Activated naive CD4-positive, alpha-beta T cell treated with anti-CD3 and anti-CD28 coated beads for 36 hours (primary cell): ENCODE measurements at regions of chr7 and their contacts with region 1.

Region 1: DNA sequence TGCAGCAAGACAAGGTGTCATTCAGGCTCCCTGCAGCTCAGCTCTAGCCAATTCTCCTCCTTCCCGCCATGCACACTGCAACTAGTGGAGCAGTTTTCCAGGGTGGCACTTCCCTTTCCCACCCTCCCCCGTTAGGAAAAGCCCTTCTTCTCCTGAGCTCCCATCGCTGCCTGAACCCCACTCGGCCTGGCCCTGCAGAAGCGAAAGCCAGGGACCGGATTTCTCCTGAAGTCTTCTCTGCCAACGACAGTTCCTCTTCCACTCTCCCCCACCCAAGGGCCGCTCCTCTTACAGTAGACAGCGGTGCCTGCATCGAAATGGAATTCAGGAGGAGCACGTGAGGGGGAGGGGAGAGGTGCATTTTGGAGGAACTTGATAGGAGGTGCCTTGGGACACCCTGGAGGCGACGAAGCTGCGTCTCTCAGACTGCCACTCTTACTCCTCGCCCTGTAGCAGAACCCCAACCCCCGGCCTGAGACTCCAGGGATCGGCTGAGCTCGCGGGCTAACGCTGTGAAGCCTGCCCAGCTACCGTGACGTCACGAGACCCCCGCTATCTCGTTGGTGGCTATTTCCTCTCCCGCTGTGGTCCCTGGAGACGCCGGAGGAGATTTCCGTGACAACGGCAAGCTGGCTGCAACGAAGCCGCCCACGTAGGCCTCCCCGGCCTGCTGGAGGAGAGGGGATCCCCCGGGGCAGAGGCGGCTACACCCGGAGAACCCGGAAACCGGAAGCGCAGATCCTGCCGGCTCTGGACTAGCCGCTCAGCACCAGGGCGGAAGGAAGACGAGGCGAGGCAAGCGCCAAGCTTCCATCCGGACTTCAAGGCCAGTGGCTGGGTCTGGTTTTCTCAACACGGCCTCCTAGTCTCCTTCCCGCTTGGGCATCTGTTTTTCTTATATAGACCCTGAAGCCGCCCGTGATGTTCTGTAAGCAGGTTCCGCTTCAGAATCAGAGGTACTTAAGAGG is 109.7 kb downstream of the RALA start:
- DNase-seq: peak; percentile 98
- H3K4me3 Mint-ChIP-seq: peak overlapping the region; percentile 74
- H3K27ac Mint-ChIP-seq: peak overlapping the region; percentile 61
- H3K4me1 Mint-ChIP-seq: peaks cover 32% of the 10 kb centered on the region
- H3K27me3 Mint-ChIP-seq: peaks cover 3% of the 10 kb centered on the region

Region 2: DNA sequence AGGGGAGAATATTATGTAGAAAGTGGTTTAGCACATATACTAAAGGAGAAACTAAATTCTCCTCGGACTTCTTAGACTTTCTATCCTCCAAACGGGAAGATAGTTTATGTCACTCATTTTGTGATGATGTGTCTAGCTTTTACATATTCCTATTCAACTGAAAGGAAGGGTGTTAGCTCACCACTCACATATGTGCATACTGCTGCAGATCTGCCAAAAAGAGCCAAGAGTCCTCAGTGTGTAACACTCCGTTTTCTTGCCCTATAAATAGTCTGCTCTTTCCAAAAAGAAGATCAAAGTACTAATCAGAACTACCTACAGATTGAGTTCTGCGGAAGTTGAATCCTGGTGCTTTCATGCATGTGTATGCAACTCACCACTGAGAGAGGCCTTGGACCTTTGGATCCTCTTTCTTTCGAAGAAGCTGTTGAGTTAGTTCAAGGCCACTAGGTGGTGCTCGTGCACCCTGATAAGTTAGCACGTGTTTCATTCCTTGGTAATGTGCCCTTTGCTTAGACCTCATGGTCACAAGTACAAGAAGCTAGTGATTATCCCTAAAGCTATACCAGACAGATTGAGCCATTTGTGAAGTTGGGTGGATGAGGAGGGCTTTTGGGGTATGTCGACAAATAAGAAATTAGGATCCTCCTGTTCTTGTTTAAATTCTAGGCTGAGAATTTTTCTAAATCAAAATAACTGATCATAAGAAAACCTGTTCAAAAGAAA is 152.8 kb before region 1 on chr7:
- CTCF ChIA-PET with region 1: interaction called, 364 read pairs
- intact Hi-C with region 1: no loop called
- DNase-seq: peak; percentile 89
- H3K4me3 Mint-ChIP-seq: no peak overlapping the region
- H3K27ac Mint-ChIP-seq: no peak overlapping the region
- H3K4me1 Mint-ChIP-seq: peaks cover 11% of the 10 kb centered on the region
- H3K27me3 Mint-ChIP-seq: no peaks in the 10 kb centered on the region

Region 3: DNA sequence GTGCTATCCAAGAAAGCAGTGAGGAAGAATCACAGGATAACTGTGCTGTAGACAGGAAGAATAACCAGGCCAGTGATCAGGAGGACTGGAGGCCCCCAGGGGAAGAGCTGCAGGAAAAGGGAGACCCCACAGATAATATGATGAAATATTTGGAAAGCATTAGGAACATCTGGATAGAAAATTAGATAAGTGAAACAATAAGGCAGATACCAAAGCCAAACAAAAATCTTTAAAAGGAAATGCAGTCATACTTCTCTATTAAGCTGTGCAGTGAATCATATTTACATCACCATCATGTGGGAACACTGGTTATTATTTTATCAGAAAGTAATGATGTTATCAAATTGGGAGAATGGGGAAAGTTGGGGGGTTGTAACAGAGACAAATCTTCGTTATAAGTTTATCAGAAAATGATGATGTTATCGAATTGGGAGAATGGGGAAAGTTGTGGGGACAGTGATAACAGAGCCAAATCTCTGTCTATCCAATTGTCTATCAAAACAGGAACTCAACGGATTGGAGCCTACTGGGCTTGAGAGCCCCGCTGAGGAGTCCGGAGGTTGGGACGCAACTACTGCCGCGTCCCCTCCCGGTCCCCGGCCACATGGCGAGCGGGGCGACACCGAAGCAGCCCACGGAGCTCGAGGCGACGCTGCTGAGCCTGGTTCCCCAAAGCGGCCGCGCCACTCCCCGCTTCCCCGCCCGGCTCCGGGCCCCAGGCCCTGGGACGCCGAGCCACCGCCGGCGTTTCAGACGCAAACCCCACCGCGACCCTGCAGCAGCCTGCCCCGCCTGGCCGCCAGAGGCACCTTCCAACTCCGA is 123.8 kb before region 1 on chr7:
- CTCF ChIA-PET with region 1: no interaction called
- intact Hi-C with region 1: loop called (anchors 1 kb)
- DNase-seq: peak; percentile 20
- H3K4me3 Mint-ChIP-seq: peak overlapping the region; percentile 55
- H3K27ac Mint-ChIP-seq: peak overlapping the region; percentile 39
- H3K4me1 Mint-ChIP-seq: peaks cover 48% of the 10 kb centered on the region
- H3K27me3 Mint-ChIP-seq: peaks cover 3% of the 10 kb centered on the region

Region 4: DNA sequence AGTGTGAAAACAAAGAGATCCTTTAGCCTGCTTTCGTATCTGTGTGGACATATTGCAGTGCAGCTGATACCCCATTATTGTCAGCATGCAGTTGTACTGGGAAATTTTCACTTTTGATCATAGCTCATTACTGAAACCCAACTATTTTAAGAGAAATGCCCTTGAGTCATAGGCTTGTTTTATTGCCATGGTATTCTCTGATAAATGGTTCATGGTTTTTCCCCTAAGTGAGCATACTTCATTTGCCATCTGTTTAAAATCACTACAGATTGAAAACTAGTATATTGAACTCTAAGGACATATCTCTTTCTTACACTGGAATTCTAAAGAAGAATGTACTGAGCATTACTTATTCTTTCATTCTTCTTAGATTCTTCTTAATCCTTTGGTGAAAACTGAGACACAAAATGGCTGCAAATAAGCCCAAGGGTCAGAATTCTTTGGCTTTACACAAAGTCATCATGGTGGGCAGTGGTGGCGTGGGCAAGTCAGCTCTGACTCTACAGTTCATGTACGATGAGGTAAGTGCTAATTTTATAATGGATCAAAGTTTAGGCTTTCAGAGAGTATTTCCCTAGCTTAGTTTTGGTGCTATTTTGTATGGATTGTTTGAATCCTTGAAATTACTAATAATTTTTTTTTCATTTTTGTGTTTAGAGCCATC is 46.7 kb before region 1 on chr7:
- CTCF ChIA-PET with region 1: interaction called, 4 read pairs
- intact Hi-C with region 1: loop called (anchors 1 kb)
- DNase-seq: no peak
- H3K4me3 Mint-ChIP-seq: no peak overlapping the region
- H3K27ac Mint-ChIP-seq: peak overlapping the region; percentile 69
- H3K4me1 Mint-ChIP-seq: peaks cover 65% of the 10 kb centered on the region
- H3K27me3 Mint-ChIP-seq: no peaks in the 10 kb centered on the region

Region 5: GRCh38 chr7:40134428-40135316 is 401.6 kb after region 1 on chr7 and contains the starts of genes MPLKIP and SUGCT:
- CTCF ChIA-PET with region 1: no interaction called
- intact Hi-C with region 1: loop called (anchors 1 kb)
- DNase-seq: peak; percentile 87
- H3K4me3 Mint-ChIP-seq: peak within 1 kb of the TSS; percentile 93
- H3K27ac Mint-ChIP-seq: peak within 1 kb of the TSS; percentile 96
- H3K4me1 Mint-ChIP-seq: peaks cover 26% of the 10 kb centered on the region
- H3K27me3 Mint-ChIP-seq: no peaks in the 10 kb centered on the region
- total RNA-seq, gene MPLKIP: 38.1 to 38.8 TPM
- total RNA-seq, gene SUGCT: 0.81 to 1.2 TPM